ENCODE measurements at regions of chr1 and their contacts with region 1.

Region 1: GRCh38 chr1:204819495-204819894 is 51.2 kb upstream of the NFASC start:
- DNase-seq: no peak
- H3K4me3 ChIP-seq: no peak overlapping the region
- H3K27ac ChIP-seq: no peak overlapping the region
- H3K4me1 ChIP-seq: no peaks in the 10 kb centered on the region
- H3K27me3 ChIP-seq: peaks cover 91% of the 10 kb centered on the region
- CTCF ChIP-seq: no peak

Region 2: GRCh38 chr1:203776636-203777035 is 1042.9 kb before region 1 on chr1:
- CTCF ChIA-PET with region 1: no interaction called
- POLR2A ChIA-PET with region 1: interaction called, 13 read pairs
- intact Hi-C with region 1: no loop called
- DNase-seq: no peak
- H3K4me3 ChIP-seq: no peak overlapping the region
- H3K27ac ChIP-seq: no peak overlapping the region
- H3K4me1 ChIP-seq: no peaks in the 10 kb centered on the region
- H3K27me3 ChIP-seq: no peaks in the 10 kb centered on the region
- CTCF ChIP-seq: no peak

Region 3: DNA sequence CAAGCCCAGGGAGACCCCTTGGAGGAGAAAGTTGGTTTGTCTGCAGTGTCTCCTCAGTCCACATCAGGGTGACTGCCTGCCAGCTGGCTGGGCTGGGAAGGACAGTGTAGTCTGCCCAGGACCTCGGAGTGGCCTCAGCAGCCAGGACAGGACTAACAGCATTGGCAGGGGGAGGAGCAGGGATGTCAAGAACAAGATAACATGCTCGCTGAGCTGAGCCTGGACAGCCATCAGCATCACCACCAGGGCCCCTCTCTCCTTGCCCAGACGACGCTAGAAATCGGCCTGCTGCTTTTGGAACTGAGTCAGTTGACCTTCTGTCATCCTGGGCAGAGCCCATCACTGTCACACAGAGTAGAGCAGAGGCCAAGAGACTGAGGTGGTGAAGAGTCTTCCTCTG is 139.9 kb after region 1 on chr1:
- CTCF ChIA-PET with region 1: no interaction called
- POLR2A ChIA-PET with region 1: no interaction called
- intact Hi-C with region 1: loop called (anchors 5 kb)
- DNase-seq: no peak
- H3K4me3 ChIP-seq: no peak overlapping the region
- H3K27ac ChIP-seq: no peak overlapping the region
- H3K4me1 ChIP-seq: no peaks in the 10 kb centered on the region
- H3K27me3 ChIP-seq: peaks cover 100% of the 10 kb centered on the region
- CTCF ChIP-seq: no peak

Measured in PC-9 (cell line).